HepG2 (cell line): ENCODE measurements at regions of chr12 and their contacts with region 1.

Region 1: DNA sequence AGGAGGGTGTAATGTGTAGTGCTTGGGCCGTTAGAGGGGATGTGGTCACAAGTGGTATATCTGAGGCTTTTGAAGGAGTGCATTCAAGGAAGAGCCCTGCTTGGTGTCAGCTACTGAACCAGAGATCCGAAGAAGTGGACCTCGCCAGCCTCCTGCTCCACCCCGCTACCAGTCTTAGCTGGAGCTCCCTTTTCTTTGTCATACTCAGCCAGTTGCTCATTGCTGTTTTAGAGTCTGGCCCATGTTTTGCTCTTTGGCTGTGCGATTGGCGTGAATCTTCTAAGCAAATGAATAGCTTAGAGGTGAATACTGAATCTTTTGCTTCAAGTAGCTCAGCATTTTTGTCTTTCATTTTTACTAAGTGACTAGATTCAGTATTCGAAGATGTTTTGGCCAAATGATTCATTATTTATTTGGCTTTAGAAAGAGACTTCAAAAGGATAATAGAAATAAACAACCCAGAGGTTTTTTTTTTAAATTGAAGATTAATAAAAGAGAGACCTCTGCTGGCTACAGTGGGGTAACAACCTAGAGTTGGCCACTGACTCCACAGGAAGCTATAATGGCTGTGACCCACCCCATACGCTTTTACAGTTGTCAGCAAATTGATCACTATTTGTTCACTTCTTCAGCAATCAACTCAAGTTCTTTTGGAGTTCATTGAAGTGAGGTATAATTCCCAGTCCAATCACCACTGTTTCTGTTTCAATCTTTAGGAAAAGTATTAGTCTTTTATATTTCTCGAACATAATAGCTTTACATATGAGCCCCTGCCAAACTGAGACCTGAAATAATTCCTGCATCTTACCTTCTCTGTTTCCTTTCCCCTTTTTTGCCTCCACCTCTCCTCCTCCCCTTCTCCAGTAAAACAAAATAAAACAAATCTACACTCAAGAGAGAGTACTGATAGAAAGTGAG is 19.9 kb downstream of the CDKN1B start:
- DNase-seq: no peak
- ATAC-seq: peak; percentile 83
- H3K4me3 ChIP-seq: no peak overlapping the region
- H3K27ac ChIP-seq: no peak overlapping the region
- H3K4me1 ChIP-seq: peaks cover 33% of the 10 kb centered on the region
- H3K27me3 ChIP-seq: no peaks in the 10 kb centered on the region
- CTCF ChIP-seq: peak; percentile 42; the same call in 1 of the 2 replicates
- EP300 ChIP-seq: no peak
- POLR2A ChIP-seq: no peak
- RAD21 ChIP-seq: no peak

Region 2: DNA sequence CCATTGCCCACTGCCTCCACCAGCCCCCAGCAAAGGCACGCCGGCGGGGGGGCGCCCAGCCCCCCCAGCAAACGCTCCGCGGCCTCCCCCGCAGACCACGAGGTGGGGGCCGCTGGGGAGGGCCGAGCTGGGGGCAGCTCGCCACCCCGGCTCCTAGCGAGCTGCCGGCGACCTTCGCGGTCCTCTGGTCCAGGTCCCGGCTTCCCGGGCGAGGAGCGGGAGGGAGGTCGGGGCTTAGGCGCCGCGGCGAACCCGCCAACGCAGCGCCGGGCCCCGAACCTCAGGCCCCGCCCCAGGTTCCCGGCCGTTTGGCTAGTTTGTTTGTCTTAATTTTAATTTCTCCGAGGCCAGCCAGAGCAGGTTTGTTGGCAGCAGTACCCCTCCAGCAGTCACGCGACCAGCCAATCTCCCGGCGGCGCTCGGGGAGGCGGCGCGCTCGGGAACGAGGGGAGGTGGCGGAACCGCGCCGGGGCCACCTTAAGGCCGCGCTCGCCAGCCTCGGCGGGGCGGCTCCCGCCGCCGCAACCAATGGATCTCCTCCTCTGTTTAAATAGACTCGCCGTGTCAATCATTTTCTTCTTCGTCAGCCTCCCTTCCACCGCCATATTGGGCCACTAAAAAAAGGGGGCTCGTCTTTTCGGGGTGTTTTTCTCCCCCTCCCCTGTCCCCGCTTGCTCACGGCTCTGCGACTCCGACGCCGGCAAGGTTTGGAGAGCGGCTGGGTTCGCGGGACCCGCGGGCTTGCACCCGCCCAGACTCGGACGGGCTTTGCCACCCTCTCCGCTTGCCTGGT is 20.0 kb before region 1 on chr12 and contains the start of gene CDKN1B:
- CTCF ChIA-PET with region 1: interaction called, 4 read pairs
- POLR2A ChIA-PET with region 1: interaction called, 31 read pairs
- in situ Hi-C with region 1: no loop called
- intact Hi-C with region 1: no loop called
- DNase-seq: peak; percentile 86
- ATAC-seq: peak; percentile 86
- H3K4me3 ChIP-seq: peak within 1 kb of the TSS; percentile 92 to 96 (median 96)
- H3K27ac ChIP-seq: peak within 1 kb of the TSS; percentile 99
- H3K4me1 ChIP-seq: peaks cover 47% of the 10 kb centered on the region
- H3K27me3 ChIP-seq: no peaks in the 10 kb centered on the region; a peak in 2 of 5 replicates
- CTCF ChIP-seq: no peak
- EP300 ChIP-seq: peak in 1 of 2 experiments; percentile 26; a peak in 1 of 4 replicates
- POLR2A ChIP-seq: peak; percentile 55 to 78
- RAD21 ChIP-seq: no peak
- total RNA-seq, gene CDKN1B: 37.2 and 39.6 TPM in 2 replicates

Region 3: GRCh38 chr12:12724661-12725545 is 12.1 kb before region 1 on chr12:
- CTCF ChIA-PET with region 1: no interaction called
- POLR2A ChIA-PET with region 1: interaction called, 22 read pairs
- in situ Hi-C with region 1: no loop called
- intact Hi-C with region 1: no loop called
- DNase-seq: peak; percentile 97
- ATAC-seq: peak; percentile 74
- H3K4me3 ChIP-seq: peak overlapping the region; percentile 73 to 96 (median 85)
- H3K27ac ChIP-seq: peak overlapping the region; percentile 98
- H3K4me1 ChIP-seq: peaks cover 52% of the 10 kb centered on the region
- H3K27me3 ChIP-seq: no peaks in the 10 kb centered on the region
- CTCF ChIP-seq: no peak
- EP300 ChIP-seq: peak; percentile 41 to 80; a peak in 2 of 4 replicates
- POLR2A ChIP-seq: peak; percentile 65; a peak in 3 of 4 replicates
- RAD21 ChIP-seq: no peak